Activated T-helper 1 cell treated with anti-CD3 and anti-CD28 coated beads, Interleukin-12 subunit alpha, Interleukin-12 subunit beta, Interleukin-2, Interleukin-4 antibody, amounts not matched to agents 30 ng/mL and 10 ng/mL and 1 ng/mL, durations not matched to agents 14 hours and 24 hours and 36 hours (primary cell): ENCODE measurements at regions of chr1 and their contacts with region 1.

Region 1: GRCh38 chr1:55164906-55165305 is 50.3 kb downstream of the USP24 start:
- DNase-seq: no peak
- H3K4me3 Mint-ChIP-seq: no peak overlapping the region
- H3K27ac Mint-ChIP-seq: peak overlapping the region; percentile 49
- H3K4me1 Mint-ChIP-seq: peaks cover 44% of the 10 kb centered on the region
- H3K27me3 Mint-ChIP-seq: no peaks in the 10 kb centered on the region

Region 2: DNA sequence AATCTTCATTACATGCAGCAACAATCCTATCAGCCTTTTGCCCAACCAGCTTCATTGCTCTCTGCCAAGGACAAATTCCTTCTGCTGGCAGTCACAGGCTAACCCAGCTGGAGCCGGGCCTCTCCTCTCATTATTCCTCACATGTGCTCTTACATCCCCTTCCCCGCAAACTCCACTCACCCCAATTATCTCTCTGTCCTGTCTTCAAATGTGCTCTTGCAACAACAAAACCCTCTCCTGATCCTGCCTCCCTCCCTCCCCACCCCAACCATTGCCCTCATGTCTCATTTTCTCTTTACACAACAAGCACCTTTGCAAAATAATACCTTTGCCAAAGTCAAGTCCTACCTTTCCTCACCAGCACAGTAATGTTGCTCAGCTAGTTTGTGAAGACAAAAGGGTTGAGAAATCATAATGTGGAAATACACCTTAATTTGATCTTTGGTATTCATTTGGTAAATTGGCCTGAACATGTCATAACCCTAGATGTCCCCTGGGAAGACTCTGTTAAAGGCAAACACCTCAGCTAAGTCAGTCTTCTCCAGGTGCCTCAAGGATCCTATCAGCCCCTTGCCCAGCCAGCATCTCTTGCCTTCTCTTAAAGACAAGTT is 241.9 kb before region 1 on chr1:
- intact Hi-C with region 1: no loop called
- DNase-seq: no peak
- H3K4me3 Mint-ChIP-seq: no peak overlapping the region
- H3K27ac Mint-ChIP-seq: no peak overlapping the region
- H3K4me1 Mint-ChIP-seq: no peaks in the 10 kb centered on the region
- H3K27me3 Mint-ChIP-seq: peaks cover 13% of the 10 kb centered on the region

Region 3: DNA sequence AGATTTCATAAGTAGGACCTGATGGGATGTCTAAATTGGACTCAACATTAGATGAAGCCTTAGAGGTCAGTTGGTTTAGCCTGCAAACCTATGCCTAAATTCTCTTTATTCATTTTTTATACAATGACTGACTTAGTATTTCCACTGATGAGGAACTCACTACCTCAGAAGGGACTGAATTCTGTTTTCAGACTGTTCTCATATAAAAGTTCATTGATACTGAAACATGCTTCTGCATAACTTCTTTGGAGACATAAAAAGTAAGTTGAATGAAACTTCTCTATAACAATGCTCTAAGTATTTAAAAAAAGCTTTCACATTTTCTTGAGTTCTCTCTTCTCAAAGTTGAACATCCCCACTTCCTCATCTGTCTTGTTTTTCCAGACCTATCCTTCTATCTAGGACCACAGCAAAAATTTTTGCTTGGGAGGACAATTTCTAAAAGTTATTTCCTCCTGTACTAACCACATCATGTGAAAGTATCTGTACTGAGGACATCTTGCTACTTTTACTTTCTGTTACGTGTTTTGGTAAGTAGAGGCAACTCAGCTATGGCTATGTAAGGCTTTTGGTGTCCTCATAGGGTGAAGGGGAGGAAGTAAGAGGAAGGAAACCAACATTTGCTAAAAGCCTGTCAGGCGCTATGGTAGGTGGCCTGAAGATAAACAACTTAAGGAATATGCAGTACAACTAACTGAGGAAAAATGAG is 13.9 kb before region 1 on chr1:
- intact Hi-C with region 1: loop called (anchors 2 kb)
- DNase-seq: no peak
- H3K4me3 Mint-ChIP-seq: peak overlapping the region; percentile 62
- H3K27ac Mint-ChIP-seq: peak overlapping the region; percentile 79
- H3K4me1 Mint-ChIP-seq: peaks cover 29% of the 10 kb centered on the region
- H3K27me3 Mint-ChIP-seq: no peaks in the 10 kb centered on the region